Pancreas (tissue), 10 donors: ENCODE measurements at regions of chr20 and their contacts with region 1.

Region 1: DNA sequence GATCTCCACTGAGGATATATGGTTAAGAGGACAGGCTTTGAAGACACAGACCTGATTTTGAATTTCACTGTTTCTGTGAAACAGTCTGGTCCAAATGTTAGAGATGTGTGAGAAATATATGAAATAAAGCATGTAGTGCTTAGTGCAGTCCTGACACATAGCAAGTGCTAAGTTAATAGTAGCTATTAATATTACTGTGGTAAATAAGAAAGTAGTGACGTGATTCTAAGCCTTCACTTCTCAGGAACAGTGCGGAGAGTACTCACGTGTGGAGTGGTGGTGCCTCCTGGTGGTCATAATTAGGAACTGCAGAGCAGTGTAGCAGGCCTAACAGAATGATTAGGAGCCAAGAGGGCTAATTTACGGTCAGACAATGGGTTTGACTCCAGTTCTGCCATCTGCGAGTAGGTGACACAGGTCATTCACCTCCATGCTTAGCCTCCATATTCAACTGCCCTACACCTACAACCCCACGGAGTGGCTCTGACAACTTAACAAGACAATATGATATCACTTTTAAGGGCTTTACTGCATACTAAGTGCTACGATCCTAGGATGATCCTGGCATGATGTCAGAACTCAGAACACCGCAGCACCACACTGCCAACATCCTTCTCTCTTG is 106.2 kb downstream of the JPH2 start:
- DNase-seq: peak in 5 of 6 donors; percentile 44 to 78 (median 69)
- ATAC-seq: peak; percentile 89 to 99 (median 96)
- H3K4me3 ChIP-seq: no peak overlapping the region
- H3K27ac ChIP-seq: no peak overlapping the region
- H3K4me1 ChIP-seq: no peaks in the 10 kb centered on the region
- H3K27me3 ChIP-seq: no peaks in the 10 kb centered on the region
- CTCF ChIP-seq: peak; percentile 95 to 98 (median 98)

Region 2: GRCh38 chr20:43448748-43449535 is 631.8 kb before region 1 on chr20:
- intact Hi-C with region 1: loop called in 2 of 3 experiments (anchors 5 to 10 kb)
- DNase-seq: peak in 2 of 6 donors; percentile 13 to 54
- ATAC-seq: peak; percentile 77 to 96 (median 88)
- H3K4me3 ChIP-seq: no peak overlapping the region
- H3K27ac ChIP-seq: no peak overlapping the region
- H3K4me1 ChIP-seq: no peaks in the 10 kb centered on the region
- H3K27me3 ChIP-seq: no peaks in the 10 kb centered on the region
- CTCF ChIP-seq: peak; percentile 41 to 74 (median 54)

Region 3: DNA sequence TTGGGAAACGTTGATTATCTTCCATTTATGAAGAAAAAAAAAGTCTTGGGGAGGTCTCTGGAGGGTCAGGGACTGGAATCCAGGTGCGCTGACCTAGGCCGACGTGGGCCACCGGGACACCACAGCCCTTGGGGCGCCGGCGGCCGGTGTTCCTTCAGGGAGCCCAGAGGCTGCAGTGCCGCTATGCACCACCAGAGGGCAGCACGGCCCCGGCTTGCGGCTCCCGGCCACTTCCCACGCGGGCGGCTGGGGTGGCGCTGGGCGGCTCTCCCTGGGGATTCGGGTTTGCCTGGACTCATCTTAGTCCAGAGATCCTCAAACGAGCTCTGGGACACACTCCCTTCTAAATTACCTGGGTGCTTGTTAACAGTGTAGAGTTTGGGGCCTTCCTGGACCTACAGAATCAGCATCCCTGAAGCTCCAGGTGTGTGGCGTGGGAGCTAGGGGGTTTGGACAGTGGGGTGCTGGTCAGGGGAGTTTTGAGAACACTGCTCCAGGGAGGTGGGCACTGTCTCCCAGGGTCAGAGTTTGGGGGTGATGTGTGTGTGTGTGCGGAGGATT is 330.9 kb before region 1 on chr20:
- intact Hi-C with region 1: loop called (anchors 5 to 10 kb)
- DNase-seq: peak; percentile 41 to 99 (median 79)
- ATAC-seq: peak; percentile 79 to 93 (median 92)
- H3K4me3 ChIP-seq: no peak overlapping the region
- H3K27ac ChIP-seq: no peak overlapping the region
- H3K4me1 ChIP-seq: no peaks in the 10 kb centered on the region
- H3K27me3 ChIP-seq: peaks cover 0 to 19% (median 1%) of the 10 kb centered on the region in 4 donors
- CTCF ChIP-seq: peak; percentile 99

Region 4: DNA sequence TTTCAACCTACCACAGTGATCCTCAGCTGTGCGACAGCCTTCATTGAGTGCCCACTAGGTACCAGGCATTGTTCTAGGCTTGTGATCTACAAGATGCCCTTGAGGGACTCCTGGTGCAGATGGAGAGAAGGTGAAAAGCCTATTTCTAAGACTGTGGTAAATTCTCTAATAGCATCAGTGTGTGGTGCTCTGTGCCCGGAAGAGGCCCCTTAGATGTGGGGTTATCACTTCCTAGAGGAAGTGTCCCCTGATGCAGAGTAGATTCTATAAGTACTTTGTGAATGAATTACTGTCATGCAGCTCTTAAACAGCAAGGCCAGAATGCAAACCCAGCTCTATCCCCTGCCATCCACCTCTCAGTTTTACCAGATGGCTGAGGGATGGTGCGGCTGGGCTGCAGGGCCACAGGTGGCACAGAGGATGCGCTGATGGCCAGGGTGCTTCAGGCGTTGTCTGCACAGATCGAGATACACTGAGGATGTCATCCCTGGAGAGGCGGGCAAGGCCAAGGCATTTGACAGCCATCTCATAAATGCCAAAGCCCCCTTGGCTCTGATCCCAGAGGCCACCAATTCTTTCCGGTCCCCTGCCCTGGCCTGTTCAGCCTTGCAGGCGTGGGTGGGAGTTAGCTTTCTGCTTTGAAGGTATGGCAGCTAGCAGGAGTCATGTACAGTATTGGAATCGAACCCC is 69.4 kb before region 1 on chr20:
- intact Hi-C with region 1: no loop called
- DNase-seq: no peak
- ATAC-seq: no peak
- H3K4me3 ChIP-seq: no peak overlapping the region
- H3K27ac ChIP-seq: no peak overlapping the region
- H3K4me1 ChIP-seq: no peaks in the 10 kb centered on the region
- H3K27me3 ChIP-seq: no peaks in the 10 kb centered on the region
- CTCF ChIP-seq: no peak

Region 5: GRCh38 chr20:44028868-44029847 is 51.6 kb before region 1 on chr20:
- intact Hi-C with region 1: no loop called
- DNase-seq: no peak
- ATAC-seq: no peak
- H3K4me3 ChIP-seq: no peak overlapping the region
- H3K27ac ChIP-seq: no peak overlapping the region
- H3K4me1 ChIP-seq: no peaks in the 10 kb centered on the region
- H3K27me3 ChIP-seq: no peaks in the 10 kb centered on the region
- CTCF ChIP-seq: no peak